ENCODE measurements at regions of chr20 and their contacts with region 1.

Region 1: GRCh38 chr20:61584851-61585250 is 332.8 kb downstream of the CDH4 start:
- DNase-seq: no peak

Region 2: GRCh38 chr20:61234803-61235113 is 350.1 kb before region 1 on chr20:
- intact Hi-C with region 1: no loop called
- DNase-seq: no peak

Region 3: GRCh38 chr20:61529354-61529753 is 55.5 kb before region 1 on chr20:
- intact Hi-C with region 1: loop called in 1 of 2 experiments (anchors 2 kb)
- DNase-seq: no peak

Region 4: DNA sequence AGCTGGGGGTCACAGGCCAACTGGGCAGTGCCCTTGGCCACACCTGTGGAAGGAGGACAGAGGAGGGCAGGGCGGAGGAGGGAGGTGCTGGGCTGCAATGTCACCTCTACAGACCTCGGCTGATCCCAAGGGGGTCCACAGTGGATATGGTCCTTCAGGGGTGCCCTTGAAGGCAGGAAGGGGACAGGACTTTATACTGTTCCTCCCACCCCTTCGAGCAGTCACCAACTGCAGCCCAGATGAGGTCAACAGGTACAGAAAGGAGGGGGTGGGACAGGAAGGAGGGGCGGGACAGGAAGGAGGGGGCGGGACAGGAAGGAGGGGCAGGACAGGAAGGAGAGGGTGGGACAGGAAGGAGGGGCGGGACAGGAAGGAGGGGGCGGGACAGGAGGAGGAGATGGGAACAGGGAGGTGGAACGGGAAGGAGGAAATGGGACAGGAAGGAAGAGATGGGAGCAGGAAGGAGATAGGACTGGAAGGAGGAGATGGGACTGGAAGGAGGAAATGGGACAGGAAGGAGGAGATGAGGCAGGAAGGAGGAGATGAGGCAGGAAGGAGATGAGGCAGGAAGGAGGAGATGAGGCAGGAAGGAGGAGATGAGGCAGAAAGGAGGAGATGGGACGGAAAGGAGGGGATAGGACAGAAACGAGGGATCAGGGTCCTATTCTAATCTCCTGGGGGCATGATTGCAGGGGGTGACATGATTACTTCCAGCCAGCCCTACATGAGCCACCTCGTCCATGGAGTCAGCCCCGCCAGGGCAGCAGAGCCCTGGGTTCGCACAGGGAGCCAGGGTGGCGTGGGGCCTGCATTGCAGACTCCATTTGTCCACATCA is 1192.1 kb after region 1 on chr20:
- intact Hi-C with region 1: loop called in 1 of 2 experiments (anchors 5 kb)
- DNase-seq: no peak